ENCODE measurements at regions of chr15 and their contacts with region 1.

Region 1: DNA sequence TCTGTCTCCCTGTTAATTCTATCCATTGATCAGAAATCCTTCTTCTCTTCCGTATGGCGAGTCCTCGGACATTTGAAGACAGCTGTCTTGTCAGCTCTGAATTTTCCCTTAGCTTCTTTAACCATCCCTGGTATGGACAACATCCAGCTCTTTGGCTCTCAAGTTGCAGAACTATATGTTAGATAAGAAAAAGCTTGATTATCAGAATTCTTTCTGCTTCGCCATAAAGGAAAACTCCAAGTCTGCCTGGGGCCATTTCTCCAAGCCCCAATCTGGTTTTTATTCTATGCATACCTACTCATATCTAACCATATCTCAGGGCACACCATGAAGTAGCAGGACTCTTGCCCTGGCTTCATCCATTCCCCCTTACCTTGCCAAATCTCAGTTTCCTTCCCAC is 215.7 kb upstream of the TMC3 start:
- DNase-seq: no peak
- ATAC-seq: no peak
- H3K4me3 ChIP-seq: no peak overlapping the region
- H3K27ac ChIP-seq: no peak overlapping the region
- H3K4me1 ChIP-seq: no peaks in the 10 kb centered on the region
- H3K27me3 ChIP-seq: no peaks in the 10 kb centered on the region
- CTCF ChIP-seq: no peak

Region 2: GRCh38 chr15:81531109-81531592 is 58.5 kb before region 1 on chr15:
- intact Hi-C with region 1: no loop called
- DNase-seq: no peak
- ATAC-seq: no peak
- H3K4me3 ChIP-seq: no peak overlapping the region
- H3K27ac ChIP-seq: no peak overlapping the region
- H3K4me1 ChIP-seq: no peaks in the 10 kb centered on the region
- H3K27me3 ChIP-seq: no peaks in the 10 kb centered on the region
- CTCF ChIP-seq: no peak

Region 3: GRCh38 chr15:81612630-81613029 is 23.0 kb after region 1 on chr15:
- intact Hi-C with region 1: loop called in 1 of 2 experiments (anchors 2 kb)
- DNase-seq: no peak
- ATAC-seq: no peak
- H3K4me3 ChIP-seq: no peak overlapping the region
- H3K27ac ChIP-seq: no peak overlapping the region
- H3K4me1 ChIP-seq: no peaks in the 10 kb centered on the region
- H3K27me3 ChIP-seq: no peaks in the 10 kb centered on the region
- CTCF ChIP-seq: no peak

Measured in psoas muscle (tissue), 8 donors.